Astrocyte of the cerebellum (primary cell): ENCODE measurements at regions of chr14 and their contacts with region 1.

Region 1: GRCh38 chr14:103301512-103302354 is 32.3 kb upstream of the EIF5 start:
- DNase-seq: no peak
- H3K4me3 ChIP-seq: no peak overlapping the region
- CTCF ChIP-seq: no peak

Region 2: DNA sequence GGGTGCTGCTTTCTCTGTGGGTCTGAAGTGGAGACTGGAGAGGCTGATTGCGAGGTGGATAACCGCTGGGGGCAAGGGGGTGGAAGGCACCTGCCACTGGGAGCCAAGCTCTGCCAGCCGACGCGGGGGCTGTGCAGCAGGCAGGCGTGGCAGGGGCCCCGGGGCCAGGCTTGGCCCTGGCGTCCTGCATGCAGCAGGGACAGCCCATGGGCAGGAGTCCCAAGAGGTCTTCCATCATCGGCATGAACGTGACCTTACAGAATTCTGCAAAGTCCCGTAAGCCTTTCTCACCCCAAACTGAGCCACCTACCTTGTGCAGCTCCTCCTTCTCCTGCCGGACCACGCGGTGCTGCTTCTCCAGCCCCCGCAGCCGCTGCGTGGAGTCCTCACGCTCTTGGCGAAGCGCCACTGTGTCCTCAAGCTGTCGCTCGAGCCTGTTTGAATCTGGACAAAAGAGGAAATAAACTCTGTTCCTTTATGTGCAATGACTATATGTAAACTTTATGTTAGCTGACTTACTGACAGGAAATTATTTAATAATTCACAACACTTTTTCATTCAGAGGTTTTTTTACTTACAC is 327.9 kb before region 1 on chr14:
- in situ Hi-C with region 1: loop called (anchors 10 kb)
- DNase-seq: no peak
- H3K4me3 ChIP-seq: no peak overlapping the region
- CTCF ChIP-seq: no peak

Region 3: GRCh38 chr14:103372603-103373304 is 71.0 kb after region 1 on chr14:
- in situ Hi-C with region 1: no loop called
- DNase-seq: peak; percentile 73
- H3K4me3 ChIP-seq: no peak overlapping the region
- CTCF ChIP-seq: no peak